Activated CD4-positive, alpha-beta memory T cell treated with anti-CD3 and anti-CD28 coated beads for 36 hours (primary cell): ENCODE measurements at regions of chr11 and their contacts with region 1.

Region 1: GRCh38 chr11:64204464-64204989 is 2.0 kb upstream of the FERMT3 start:
- DNase-seq: peak; percentile 88
- H3K4me3 Mint-ChIP-seq: peak overlapping the region; percentile 64
- H3K27ac Mint-ChIP-seq: peak overlapping the region; percentile 87
- H3K4me1 Mint-ChIP-seq: peaks cover 44% of the 10 kb centered on the region
- H3K27me3 Mint-ChIP-seq: no peaks in the 10 kb centered on the region

Region 2: GRCh38 chr11:64185816-64186498 is 18.6 kb before region 1 on chr11 and contains the start of gene STIP1:
- CTCF ChIA-PET with region 1: interaction called, 54 read pairs
- POLR2A ChIA-PET with region 1: interaction called, 111 read pairs
- intact Hi-C with region 1: loop called (anchors 1 kb)
- DNase-seq: peak; percentile 99
- H3K4me3 Mint-ChIP-seq: peak within 1 kb of the TSS; percentile 91
- H3K27ac Mint-ChIP-seq: peak within 1 kb of the TSS; percentile 96
- H3K4me1 Mint-ChIP-seq: peaks cover 42% of the 10 kb centered on the region
- H3K27me3 Mint-ChIP-seq: no peaks in the 10 kb centered on the region
- total RNA-seq, gene STIP1: 402 to 413 TPM

Region 3: DNA sequence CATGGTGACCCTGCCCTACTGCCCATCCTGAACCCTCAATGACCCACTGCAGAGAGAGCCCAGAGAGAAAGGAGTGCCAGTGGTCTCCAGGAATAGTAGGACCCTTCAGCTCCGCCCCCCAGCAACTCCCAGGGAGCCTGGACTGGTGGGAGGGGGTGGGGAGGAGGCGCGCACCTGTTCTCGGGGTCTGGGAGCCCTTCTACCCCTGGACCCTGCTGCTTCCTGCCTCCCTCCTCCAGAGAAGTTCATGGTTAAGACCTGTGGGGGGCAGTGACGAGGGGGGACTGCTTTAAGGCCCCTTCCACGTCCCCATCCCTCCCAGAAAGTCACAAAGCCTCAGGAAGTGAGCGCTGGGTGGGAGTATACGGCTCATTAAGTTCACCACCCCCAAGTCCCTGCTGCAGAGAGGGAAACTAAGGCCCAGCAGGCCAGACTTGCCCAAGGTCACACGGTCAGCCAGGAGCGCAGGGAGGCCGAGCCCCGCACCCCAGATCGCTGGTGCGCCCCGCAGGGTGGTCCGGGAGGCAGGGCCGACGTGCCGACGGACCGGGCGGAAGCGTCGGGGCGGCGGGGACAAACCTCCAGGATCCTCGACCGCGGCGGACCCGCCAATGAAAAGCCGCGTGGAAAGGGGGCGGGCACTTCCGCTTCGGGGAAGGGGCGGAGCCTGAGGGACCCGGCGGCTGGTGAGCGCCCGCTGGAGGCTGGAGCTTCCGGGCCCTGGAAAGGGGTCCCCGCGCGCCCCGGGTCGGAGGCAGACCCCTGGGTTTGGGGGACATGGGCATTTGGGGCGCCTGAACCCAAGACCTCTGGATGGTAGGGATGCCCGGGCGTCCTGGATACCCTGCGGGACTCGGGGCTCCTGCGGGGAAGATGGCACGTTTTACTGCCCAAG is 21.3 kb after region 1 on chr11 and contains the starts of genes NUDT22 and TRPT1:
- CTCF ChIA-PET with region 1: interaction called, 38 read pairs
- POLR2A ChIA-PET with region 1: interaction called, 66 read pairs
- intact Hi-C with region 1: loop called (anchors 1 kb)
- DNase-seq: peak; percentile 95
- H3K4me3 Mint-ChIP-seq: peak within 1 kb of the TSS; percentile 88
- H3K27ac Mint-ChIP-seq: peak within 1 kb of the TSS; percentile 84
- H3K4me1 Mint-ChIP-seq: peaks cover 28% of the 10 kb centered on the region
- H3K27me3 Mint-ChIP-seq: no peaks in the 10 kb centered on the region
- total RNA-seq, gene NUDT22: 69.8 to 79.8 TPM
- total RNA-seq, gene TRPT1: 30.4 to 35.6 TPM

Region 4: DNA sequence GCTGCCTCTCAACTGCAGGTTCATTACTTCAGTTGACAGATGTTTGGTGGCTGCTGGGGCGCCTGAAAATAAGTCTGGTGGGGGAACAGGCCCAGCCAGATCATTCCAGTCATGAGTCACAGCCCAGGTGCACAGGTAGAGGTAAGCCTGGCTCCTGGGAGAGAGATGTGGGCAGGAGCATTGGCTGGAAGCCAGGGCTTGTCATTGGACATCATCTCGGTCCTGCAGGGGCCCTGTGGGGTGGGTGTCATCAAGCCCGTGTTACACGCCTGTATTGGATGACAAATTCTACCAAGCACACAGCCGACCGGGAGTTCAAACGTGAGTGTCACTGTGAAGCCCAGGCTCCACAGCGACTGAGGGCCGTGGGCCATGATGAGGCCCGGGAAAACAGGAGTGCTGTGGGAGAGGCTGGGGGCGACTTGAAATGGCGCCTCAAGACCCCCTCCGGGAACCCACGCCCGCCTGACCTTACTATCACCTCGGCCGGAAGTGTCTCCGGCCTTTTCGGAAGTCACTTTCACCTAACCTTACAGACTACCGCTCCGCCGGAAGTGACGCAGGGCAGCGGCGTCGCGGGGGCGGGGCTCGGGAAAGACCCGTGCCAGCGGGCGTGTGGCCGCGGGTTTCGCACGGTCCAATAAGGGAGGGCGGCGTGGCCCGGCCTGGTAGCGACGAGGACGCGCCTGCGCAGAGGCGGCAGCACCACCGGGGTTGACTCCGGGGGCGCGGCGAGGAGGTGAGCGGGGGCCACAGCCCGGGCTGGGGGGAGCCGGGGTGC is 36.1 kb after region 1 on chr11 and contains the start of gene FKBP2:
- CTCF ChIA-PET with region 1: interaction called, 14 read pairs
- POLR2A ChIA-PET with region 1: interaction called, 21 read pairs
- intact Hi-C with region 1: loop called (anchors 1 kb)
- DNase-seq: peak; percentile 98
- H3K4me3 Mint-ChIP-seq: peak within 1 kb of the TSS; percentile 89
- H3K27ac Mint-ChIP-seq: peak within 1 kb of the TSS; percentile 98
- H3K4me1 Mint-ChIP-seq: peaks cover 37% of the 10 kb centered on the region
- H3K27me3 Mint-ChIP-seq: no peaks in the 10 kb centered on the region
- total RNA-seq, gene FKBP2: 28.7 to 34.9 TPM

Region 5: GRCh38 chr11:64269380-64270234 is 65.1 kb after region 1 on chr11:
- CTCF ChIA-PET with region 1: interaction called, 13 read pairs
- POLR2A ChIA-PET with region 1: interaction called, 36 read pairs
- intact Hi-C with region 1: loop called (anchors 1 kb)
- DNase-seq: peak; percentile 99
- H3K4me3 Mint-ChIP-seq: peak overlapping the region; percentile 89
- H3K27ac Mint-ChIP-seq: peak overlapping the region; percentile 95
- H3K4me1 Mint-ChIP-seq: peaks cover 15% of the 10 kb centered on the region
- H3K27me3 Mint-ChIP-seq: no peaks in the 10 kb centered on the region

Region 6: DNA sequence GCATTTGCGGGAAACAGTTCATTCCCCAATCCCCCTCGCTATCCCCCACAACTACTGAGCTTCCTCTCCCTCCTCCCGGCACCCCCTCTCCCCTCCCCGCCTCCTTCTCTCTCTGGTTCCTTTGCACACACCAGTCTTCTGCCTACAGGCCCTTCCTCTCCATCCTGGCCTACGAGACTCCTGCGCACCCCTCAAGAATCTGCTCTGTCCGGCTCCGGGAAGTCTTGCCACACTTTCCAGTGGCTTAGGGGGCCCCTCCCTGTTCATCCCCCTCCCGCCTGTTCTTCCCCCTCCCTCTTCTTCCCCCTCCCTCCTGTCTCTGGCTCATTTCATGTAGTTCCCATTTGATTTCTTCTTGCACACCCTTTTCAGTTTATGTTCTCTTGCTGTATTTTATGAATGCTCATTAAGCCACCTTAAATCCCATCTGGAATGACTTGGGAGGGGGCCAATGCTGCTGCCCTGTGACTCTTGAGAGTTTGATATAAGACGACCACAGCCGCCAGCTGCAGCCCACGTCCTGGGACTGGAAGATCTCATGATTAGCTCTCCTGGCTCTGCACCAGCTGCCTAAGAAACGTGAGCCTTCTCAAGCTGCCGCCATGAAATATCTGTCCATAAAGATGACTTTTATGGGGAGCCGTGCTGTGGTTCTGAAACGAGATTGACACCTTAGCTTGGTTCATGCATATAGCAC is 205.3 kb after region 1 on chr11:
- CTCF ChIA-PET with region 1: no interaction called
- POLR2A ChIA-PET with region 1: no interaction called
- intact Hi-C with region 1: no loop called
- DNase-seq: no peak
- H3K4me3 Mint-ChIP-seq: no peak overlapping the region
- H3K27ac Mint-ChIP-seq: no peak overlapping the region
- H3K4me1 Mint-ChIP-seq: no peaks in the 10 kb centered on the region
- H3K27me3 Mint-ChIP-seq: no peaks in the 10 kb centered on the region